ENCODE measurements at regions of chr19 and their contacts with region 1.

Region 1: DNA sequence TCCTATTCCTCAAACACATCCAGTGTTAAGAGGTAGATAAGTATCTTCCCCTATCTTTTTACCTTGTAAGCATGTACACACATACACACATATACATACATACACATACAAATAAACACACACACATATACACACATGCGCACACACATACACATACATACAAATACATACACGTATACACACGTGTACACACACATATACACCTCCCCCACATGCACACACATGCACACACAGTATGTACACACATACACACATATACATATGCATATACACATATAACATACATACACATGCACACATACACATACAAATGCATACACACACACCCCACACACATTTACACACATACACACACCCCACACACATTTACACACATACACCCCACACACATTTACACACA is 24.1 kb downstream of the ADGRE1 start:
- DNase-seq: no peak
- H3K4me3 ChIP-seq: no peak overlapping the region
- H3K27ac ChIP-seq: no peak overlapping the region
- H3K4me1 ChIP-seq: no peaks in the 10 kb centered on the region
- H3K27me3 ChIP-seq: no peaks in the 10 kb centered on the region
- CTCF ChIP-seq: no peak
- POLR2A ChIP-seq: no peak

Region 2: GRCh38 chr19:6587093-6587820 is 324.3 kb before region 1 on chr19:
- intact Hi-C with region 1: no loop called
- DNase-seq: no peak
- H3K4me3 ChIP-seq: peak overlapping the region in 1 of 3 donors; percentile 9
- H3K27ac ChIP-seq: no peak overlapping the region
- H3K4me1 ChIP-seq: no peaks in the 10 kb centered on the region
- H3K27me3 ChIP-seq: peaks cover 4 to 80% of the 10 kb centered on the region in 2 donors
- CTCF ChIP-seq: no peak
- POLR2A ChIP-seq: no peak

Region 3: GRCh38 chr19:7340959-7341837 is 429.7 kb after region 1 on chr19:
- intact Hi-C with region 1: loop called (anchors 5 kb)
- DNase-seq: peak; percentile 64 to 73
- H3K4me3 ChIP-seq: no peak overlapping the region
- H3K27ac ChIP-seq: no peak overlapping the region
- H3K4me1 ChIP-seq: no peaks in the 10 kb centered on the region
- H3K27me3 ChIP-seq: no peaks in the 10 kb centered on the region
- CTCF ChIP-seq: peak; percentile 87 to 96 (median 94)
- POLR2A ChIP-seq: no peak